Activated CD4-positive, alpha-beta T cell treated with anti-CD3 and anti-CD28 coated beads for 36 hours (primary cell): ENCODE measurements at regions of chr3 and their contacts with region 1.

Region 1: DNA sequence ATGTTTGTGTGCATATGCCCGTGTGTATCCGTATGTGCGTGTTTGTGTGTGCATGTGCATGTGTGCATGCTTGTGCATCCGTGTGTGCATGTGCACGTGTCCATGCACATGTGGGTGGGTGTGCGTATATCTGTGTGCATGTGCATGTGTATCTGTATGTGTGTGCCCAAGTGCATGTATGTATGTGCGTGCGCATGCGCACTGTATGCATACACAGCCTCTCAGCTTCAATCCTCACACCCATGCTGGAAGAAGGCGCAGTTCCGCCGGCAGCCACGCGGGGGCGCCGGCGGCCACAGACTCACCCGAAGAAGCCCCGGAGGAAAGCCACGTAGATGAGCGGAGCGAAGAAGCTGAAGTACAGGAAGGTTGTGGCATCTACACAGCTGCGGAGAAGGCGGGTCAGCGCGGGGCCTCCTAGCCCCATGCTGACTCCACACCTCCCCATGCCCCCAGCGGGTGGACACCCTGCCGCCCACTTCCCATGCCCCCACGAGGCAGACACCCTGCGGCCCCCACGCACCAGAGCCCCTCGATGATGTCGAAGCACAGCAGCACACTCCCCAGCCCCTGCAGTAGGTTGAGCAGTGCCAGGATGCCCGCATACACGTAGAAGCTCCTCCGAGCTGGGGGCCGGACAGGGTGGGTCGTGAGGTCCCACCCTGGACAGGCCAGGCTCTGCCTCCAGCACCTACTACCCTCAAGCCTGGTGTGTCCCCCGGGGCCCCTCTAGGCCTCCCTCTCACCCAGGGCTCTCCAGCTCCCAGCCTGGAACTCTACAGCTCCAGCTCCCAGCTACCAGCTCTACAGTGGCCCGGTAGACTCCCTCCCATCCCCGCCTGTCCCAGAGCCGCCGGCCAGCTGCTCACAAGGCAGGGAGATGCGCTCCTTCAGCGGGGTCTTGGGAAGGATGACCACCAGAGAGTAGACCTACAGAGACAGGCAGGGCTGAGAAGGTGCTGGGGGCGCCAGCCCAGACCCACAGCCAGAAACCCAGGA is 15.4 kb downstream of the TPRA1 start:
- DNase-seq: peak; percentile 90
- ATAC-seq: peak; percentile 97
- H3K4me3 Mint-ChIP-seq: no peak overlapping the region
- H3K27ac Mint-ChIP-seq: peak overlapping the region; percentile 34
- H3K4me1 Mint-ChIP-seq: peaks cover 8% of the 10 kb centered on the region
- H3K27me3 Mint-ChIP-seq: no peaks in the 10 kb centered on the region

Region 2: GRCh38 chr3:127831723-127832172 is 256.6 kb after region 1 on chr3:
- CTCF ChIA-PET with region 1: interaction called, 3 read pairs
- POLR2A ChIA-PET with region 1: no interaction called
- intact Hi-C with region 1: loop called in 1 of 2 experiments (anchors 5 kb)
- DNase-seq: peak; percentile 62
- ATAC-seq: no peak
- H3K4me3 Mint-ChIP-seq: no peak overlapping the region
- H3K27ac Mint-ChIP-seq: no peak overlapping the region
- H3K4me1 Mint-ChIP-seq: no peaks in the 10 kb centered on the region
- H3K27me3 Mint-ChIP-seq: peaks cover 6% of the 10 kb centered on the region

Region 3: DNA sequence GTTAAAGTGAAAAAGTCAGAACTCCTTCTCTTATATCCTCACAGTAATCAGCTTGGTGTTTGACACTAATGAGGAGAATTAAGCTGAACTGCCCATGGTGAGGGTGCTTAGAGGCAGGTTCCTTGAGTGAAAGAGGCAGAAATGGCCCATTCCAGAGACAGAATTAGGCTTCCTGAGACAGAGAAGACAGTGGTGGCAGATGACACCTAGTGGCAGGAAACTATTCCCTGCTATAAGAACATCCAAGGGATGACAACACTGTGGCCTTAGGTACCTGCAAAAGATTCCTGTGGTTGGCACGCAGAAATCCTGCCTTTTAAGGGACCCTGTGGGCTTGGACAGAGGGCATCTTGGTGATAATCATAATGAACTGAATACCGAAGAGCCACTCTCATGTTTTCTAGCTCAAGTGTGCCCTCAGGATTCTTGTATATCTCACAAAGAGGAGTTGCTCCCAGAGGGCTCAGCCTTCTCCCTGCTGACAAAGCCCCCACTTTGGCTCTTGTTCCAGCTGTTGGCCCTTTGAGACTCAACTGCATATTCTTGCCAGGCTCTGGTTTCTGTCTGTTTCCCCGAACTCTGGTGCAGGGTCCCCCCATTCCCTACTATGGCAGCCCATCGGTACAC is 395.9 kb after region 1 on chr3:
- CTCF ChIA-PET with region 1: interaction called, 4 read pairs
- POLR2A ChIA-PET with region 1: no interaction called
- intact Hi-C with region 1: loop called (anchors 1 kb)
- DNase-seq: peak; percentile 28
- ATAC-seq: peak; percentile 53
- H3K4me3 Mint-ChIP-seq: no peak overlapping the region
- H3K27ac Mint-ChIP-seq: no peak overlapping the region
- H3K4me1 Mint-ChIP-seq: no peaks in the 10 kb centered on the region
- H3K27me3 Mint-ChIP-seq: peaks cover 14% of the 10 kb centered on the region

Region 4: DNA sequence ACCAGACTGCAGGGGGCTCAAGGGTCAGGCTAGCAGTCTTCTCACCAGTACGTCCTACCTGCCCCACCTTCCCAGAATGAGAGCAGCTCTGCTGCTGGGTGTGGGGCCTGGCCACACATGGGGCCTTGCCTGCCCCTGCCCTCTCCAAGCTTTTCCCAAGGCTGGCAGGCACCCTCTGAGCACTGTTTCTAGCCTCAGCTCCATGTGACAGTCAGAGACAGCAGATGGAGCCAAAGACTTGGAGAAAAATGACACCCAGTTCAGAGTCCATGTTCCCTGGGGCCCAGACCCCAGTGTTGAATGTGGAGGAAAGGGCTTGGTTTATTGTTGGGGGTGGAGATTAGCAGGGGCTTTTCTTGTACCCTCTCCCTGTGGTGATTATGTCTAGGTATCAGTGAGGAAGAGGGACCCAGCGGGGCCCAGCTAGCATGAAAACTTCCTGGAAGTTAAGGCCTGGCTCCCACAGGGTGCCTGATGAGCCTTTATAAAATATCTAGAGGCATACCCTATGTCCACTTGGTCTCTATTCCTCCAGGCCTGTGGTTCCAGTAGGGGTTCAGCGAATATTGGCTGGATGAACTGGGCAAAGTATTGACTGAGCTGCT is 732.0 kb after region 1 on chr3:
- CTCF ChIA-PET with region 1: no interaction called
- POLR2A ChIA-PET with region 1: no interaction called
- intact Hi-C with region 1: no loop called
- DNase-seq: no peak
- ATAC-seq: no peak
- H3K4me3 Mint-ChIP-seq: no peak overlapping the region
- H3K27ac Mint-ChIP-seq: no peak overlapping the region
- H3K4me1 Mint-ChIP-seq: peaks cover 10% of the 10 kb centered on the region
- H3K27me3 Mint-ChIP-seq: no peaks in the 10 kb centered on the region

Region 5: DNA sequence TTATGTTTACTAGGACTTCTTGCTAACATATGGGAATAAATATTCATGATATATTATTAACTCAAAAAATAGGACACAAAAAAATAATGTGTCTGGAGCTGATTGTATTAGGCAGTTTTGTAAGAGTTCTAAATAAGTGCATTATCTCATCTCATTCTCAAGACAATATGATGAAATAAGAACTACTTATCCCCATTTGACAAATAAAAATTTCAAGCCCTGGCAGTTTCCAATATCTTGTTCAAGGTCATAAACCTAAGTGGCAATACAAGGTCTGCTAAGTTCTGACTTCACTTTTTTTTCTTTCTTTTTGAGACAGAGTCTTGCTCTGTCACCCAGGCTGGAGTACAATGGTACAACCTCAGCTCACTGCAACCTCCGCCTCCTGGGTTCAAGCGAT is 1057.1 kb after region 1 on chr3:
- CTCF ChIA-PET with region 1: no interaction called
- POLR2A ChIA-PET with region 1: interaction called, 12 read pairs
- intact Hi-C with region 1: no loop called
- DNase-seq: no peak
- ATAC-seq: no peak
- H3K4me3 Mint-ChIP-seq: no peak overlapping the region
- H3K27ac Mint-ChIP-seq: no peak overlapping the region
- H3K4me1 Mint-ChIP-seq: peaks cover 1% of the 10 kb centered on the region
- H3K27me3 Mint-ChIP-seq: no peaks in the 10 kb centered on the region